ENCODE measurements at regions of chr3 and their contacts with region 1.

Region 1: DNA sequence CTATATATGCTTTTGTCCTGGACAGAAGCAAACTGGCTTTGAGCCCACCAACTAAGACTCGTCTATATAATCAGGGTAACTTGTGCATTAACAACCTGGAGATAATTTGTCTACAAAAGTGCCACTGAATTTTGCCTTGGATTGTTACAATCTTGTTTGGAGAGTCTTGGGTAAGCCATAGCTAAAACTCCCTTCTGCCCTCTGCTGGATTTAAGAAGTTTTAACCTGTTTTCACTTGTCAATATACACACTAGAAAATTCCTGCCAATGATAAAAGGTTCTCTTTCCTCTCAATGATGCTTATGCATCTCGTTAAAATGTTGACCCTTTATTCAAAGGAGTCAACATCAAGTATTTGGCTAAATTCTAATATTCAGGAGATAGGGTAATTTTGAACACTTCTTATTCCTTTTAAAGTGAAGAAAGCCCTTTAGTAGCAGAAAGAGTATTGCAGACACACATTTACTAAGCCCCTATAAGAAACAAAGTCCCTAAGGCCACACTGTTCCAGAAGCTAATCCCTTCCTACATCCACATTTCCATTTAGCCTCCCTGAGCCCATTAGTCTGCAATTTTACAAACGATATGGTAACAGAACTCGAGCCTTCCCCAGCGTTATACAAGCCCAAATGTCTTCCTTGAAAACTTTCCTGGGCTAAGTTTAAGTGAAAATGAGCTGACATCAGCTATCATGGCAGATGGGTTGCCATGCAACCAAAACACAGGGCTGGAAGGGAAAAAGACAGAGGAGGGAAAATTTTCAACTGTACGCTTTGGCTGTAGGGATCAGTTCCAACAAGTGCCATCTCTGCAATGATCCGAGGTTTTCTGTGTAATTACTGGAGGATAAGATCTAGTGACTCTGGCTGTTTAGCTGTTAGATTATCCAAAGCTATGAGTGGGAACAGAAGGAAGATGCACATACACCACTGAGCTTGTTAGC is 75.9 kb upstream of the FGF12 start:
- DNase-seq: no peak
- ATAC-seq: peak in 2 of 4 donors; percentile 49 to 69
- H3K4me3 ChIP-seq: no peak overlapping the region
- H3K27ac ChIP-seq: no peak overlapping the region
- H3K4me1 ChIP-seq: no peaks in the 10 kb centered on the region
- H3K27me3 ChIP-seq: no peaks in the 10 kb centered on the region
- CTCF ChIP-seq: peak; percentile 52

Region 2: GRCh38 chr3:191235331-191236314 is 1567.6 kb before region 1 on chr3:
- intact Hi-C with region 1: loop called in 1 of 2 experiments (anchors 10 kb)
- DNase-seq: no peak
- ATAC-seq: no peak
- H3K4me3 ChIP-seq: no peak overlapping the region
- H3K27ac ChIP-seq: no peak overlapping the region
- H3K4me1 ChIP-seq: no peaks in the 10 kb centered on the region
- H3K27me3 ChIP-seq: no peaks in the 10 kb centered on the region
- CTCF ChIP-seq: no peak

Region 3: DNA sequence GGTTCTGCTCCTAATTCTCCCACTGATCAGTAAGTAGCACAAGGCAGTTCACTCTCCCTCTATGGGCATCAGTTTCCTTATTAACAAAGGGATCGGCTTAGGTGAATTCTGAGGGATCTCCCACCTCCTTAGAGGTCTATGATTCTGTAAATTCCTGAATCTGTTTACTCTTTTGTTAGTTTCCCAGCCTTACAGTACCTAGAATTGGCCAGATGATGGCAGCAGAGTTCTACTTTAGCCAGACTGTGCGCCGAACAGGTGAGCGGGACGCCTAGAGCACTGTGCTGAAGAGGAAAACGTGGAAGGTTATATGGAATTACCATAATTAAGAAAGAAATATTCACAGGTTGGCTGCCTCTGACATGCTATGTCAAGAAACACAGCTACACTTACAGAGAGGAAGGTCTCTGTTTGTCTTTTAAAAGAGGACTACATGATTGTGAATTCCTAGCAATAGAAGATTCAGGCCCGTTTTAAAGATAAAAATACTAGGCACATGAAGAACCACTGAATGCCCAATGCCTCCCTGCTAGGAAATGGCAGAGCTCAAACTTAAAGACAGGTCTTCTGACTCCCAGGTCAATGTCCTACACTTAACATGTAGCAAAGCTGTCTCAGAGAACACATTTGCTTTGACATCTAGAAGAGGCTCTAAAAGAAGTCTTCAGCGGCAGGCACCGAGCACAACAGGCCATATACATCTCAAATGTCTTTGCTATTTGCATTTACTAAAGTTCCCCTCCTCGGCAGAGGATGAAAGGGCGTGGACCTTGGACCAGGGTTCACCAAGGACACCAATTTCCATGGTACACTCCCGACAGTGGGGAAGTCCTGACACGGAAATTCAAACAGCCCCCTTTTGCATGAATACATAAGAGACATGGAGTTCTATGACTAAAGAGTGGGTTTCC is 335.7 kb before region 1 on chr3:
- intact Hi-C with region 1: loop called (anchors 2 to 5 kb)
- DNase-seq: no peak
- ATAC-seq: peak; percentile 64 to 87 (median 76)
- H3K4me3 ChIP-seq: no peak overlapping the region
- H3K27ac ChIP-seq: no peak overlapping the region
- H3K4me1 ChIP-seq: no peaks in the 10 kb centered on the region
- H3K27me3 ChIP-seq: peaks cover 0 to 4% (median 3%) of the 10 kb centered on the region in 3 donors
- CTCF ChIP-seq: peak; percentile 87

Region 4: GRCh38 chr3:192566706-192567290 is 236.4 kb before region 1 on chr3:
- intact Hi-C with region 1: loop called (anchors 2 to 5 kb)
- DNase-seq: peak; percentile 40 to 62
- ATAC-seq: peak; percentile 54 to 83 (median 75)
- H3K4me3 ChIP-seq: no peak overlapping the region
- H3K27ac ChIP-seq: no peak overlapping the region
- H3K4me1 ChIP-seq: no peaks in the 10 kb centered on the region
- H3K27me3 ChIP-seq: no peaks in the 10 kb centered on the region
- CTCF ChIP-seq: peak; percentile 81

Region 5: DNA sequence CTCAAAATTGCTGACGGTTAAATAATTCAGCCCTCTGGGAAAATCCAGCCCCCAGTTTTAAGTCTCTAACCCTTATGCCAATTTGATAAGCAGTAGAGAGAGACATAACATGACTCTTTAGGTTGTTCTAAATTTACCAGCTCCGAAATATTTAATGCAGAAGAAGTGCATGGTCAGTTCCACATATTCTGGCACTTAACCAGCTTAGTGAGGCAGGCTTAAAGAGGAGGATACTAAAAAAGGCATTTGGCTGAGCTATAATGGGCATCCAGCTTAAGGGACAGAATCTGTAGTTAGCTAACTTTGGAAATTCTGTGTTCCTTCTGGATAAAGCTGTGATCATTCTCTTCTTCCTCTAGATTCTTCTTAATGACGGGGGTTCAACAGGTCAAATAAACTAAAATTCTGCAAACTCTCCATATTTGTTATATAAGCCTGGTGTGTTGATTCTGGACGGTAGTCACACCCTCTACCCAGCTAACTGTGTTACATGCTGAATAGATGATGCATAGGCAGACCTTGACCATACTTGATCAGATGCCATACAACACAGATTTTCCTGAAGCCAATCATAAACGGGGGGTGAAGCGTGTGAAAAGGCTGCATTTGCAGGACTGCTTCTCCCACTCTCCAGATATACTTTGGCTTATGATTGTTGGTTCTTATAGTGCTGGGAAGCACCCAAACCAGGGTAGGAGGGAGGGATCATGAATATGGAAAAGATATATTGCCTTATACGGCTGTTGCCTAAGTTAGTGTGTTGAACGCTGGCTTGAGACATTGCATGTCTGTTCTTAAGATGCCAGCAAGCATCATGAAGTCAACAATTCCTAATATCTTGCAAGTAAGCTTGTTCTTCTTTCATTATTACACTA is 194.3 kb before region 1 on chr3:
- intact Hi-C with region 1: no loop called
- DNase-seq: no peak
- ATAC-seq: no peak
- H3K4me3 ChIP-seq: no peak overlapping the region
- H3K27ac ChIP-seq: no peak overlapping the region
- H3K4me1 ChIP-seq: no peaks in the 10 kb centered on the region
- H3K27me3 ChIP-seq: no peaks in the 10 kb centered on the region
- CTCF ChIP-seq: no peak

Region 6: DNA sequence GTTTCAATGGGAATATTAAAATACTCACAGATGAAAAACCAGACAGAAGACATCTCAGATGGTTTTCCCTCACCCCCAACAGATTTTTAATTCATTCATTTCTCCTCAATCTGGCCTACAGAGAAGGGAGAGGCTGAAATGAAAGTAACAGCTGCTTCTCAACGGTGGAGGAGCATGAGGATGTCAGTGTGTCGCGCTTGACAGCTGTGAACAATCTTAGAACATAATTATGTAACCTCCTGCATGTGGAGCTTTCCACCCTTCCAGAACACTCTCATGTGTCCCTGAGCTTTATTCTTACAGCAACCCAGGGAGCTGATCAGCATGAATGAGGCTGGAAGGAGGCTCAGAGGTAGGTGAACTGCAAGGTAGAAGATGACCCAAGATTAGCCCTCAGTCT is 61.7 kb after region 1 on chr3:
- intact Hi-C with region 1: no loop called
- DNase-seq: no peak
- ATAC-seq: peak; percentile 76 to 84 (median 82)
- H3K4me3 ChIP-seq: no peak overlapping the region
- H3K27ac ChIP-seq: no peak overlapping the region
- H3K4me1 ChIP-seq: peaks cover 10% of the 10 kb centered on the region
- H3K27me3 ChIP-seq: no peaks in the 10 kb centered on the region
- CTCF ChIP-seq: no peak